ENCODE measurements at regions of chr15 and their contacts with region 1.

Region 1: DNA sequence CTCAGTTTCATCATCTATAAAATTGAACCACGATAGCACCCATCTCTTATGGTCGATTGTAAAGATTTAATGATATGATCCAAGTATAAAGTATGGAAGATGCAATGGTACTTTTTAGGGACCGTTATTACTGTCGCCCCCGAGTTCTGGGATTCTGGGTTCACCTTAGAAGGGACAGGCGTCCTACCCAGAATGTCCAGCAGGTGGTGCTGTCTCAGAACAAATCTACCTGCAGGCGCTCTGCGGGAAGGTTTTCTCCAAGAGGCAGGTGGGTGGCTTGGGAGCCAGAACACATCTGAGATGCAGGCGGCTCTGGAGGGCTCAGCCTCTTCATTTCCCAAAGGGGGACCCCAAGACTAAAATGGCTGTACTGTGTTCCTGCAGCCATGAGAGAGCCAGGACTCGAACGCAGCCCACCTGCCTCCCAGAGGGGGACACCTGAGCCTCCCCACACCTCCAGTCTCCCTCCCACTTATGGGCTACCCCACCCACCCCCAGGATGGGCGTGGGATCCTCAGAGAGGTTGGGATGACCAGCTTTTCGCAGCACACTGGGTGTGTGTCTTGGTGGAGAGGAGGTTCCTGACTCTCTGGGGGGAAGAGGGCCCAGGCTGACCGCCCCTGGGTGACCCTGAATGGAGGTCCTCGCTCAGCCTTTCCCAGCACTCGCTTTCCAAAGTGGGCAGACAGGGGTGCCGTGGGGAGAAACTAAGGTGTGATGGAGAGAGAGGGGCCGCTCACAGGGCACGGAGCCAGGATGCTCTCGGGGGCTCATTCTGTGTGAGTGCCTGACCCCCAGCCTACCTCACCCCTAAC is 28.1 kb upstream of the CORO2B start:
- DNase-seq: peak in 1 of 2 experiments; percentile 68
- H3K4me3 ChIP-seq: no peak overlapping the region
- H3K27ac ChIP-seq: no peak overlapping the region
- H3K4me1 ChIP-seq: no peaks in the 10 kb centered on the region
- H3K27me3 ChIP-seq: peaks cover 8% of the 10 kb centered on the region; the same call in 1 of the 2 replicates
- CTCF ChIP-seq: peak; percentile 86

Region 2: GRCh38 chr15:68672781-68673205 is 122.1 kb after region 1 on chr15:
- CTCF ChIA-PET with region 1: interaction called, 12 read pairs
- POLR2A ChIA-PET with region 1: no interaction called
- intact Hi-C with region 1: loop called (anchors 1 kb)
- DNase-seq: no peak
- H3K4me3 ChIP-seq: no peak overlapping the region
- H3K27ac ChIP-seq: no peak overlapping the region
- H3K4me1 ChIP-seq: no peaks in the 10 kb centered on the region
- H3K27me3 ChIP-seq: no peaks in the 10 kb centered on the region
- CTCF ChIP-seq: 0 out of 2 replicates have a peak, but pooled peaks have one; percentile 23

Region 3: DNA sequence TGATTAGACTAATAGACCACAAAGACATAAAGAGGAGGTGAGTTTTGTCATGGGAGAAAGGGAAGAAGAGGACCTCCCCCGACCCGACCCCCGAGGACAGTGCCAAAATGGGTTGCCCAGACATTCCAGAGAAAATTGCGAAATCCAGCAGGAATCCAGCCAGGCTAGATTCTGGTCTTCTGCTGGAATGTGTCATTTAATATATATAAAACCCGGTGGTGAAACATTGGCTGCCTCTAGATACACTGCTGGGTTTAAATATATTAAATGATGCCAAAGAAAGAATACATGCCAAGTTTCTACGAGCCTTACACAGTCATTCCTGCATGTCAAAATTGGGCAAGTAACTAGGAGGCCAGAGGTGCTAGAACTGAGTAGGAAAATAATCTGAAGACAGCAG is 334.4 kb after region 1 on chr15:
- CTCF ChIA-PET with region 1: interaction called, 17 read pairs
- POLR2A ChIA-PET with region 1: no interaction called
- intact Hi-C with region 1: no loop called
- DNase-seq: peak; percentile 73 to 84
- H3K4me3 ChIP-seq: no peak overlapping the region; the same call in 1 of the 2 replicates
- H3K27ac ChIP-seq: peak overlapping the region; percentile 44
- H3K4me1 ChIP-seq: peaks cover 25% of the 10 kb centered on the region
- H3K27me3 ChIP-seq: no peaks in the 10 kb centered on the region
- CTCF ChIP-seq: no peak

Region 4: GRCh38 chr15:68924866-68925560 is 374.3 kb after region 1 on chr15:
- CTCF ChIA-PET with region 1: interaction called, 4 read pairs
- POLR2A ChIA-PET with region 1: no interaction called
- intact Hi-C with region 1: loop called (anchors 1 kb)
- DNase-seq: peak; percentile 48 to 77
- H3K4me3 ChIP-seq: no peak overlapping the region
- H3K27ac ChIP-seq: no peak overlapping the region
- H3K4me1 ChIP-seq: no peaks in the 10 kb centered on the region
- H3K27me3 ChIP-seq: no peaks in the 10 kb centered on the region
- CTCF ChIP-seq: peak; percentile 86

Measured in PC-9 (cell line).